HepG2 (cell line): ENCODE measurements at regions of chr12 and their contacts with region 1.

Region 1: DNA sequence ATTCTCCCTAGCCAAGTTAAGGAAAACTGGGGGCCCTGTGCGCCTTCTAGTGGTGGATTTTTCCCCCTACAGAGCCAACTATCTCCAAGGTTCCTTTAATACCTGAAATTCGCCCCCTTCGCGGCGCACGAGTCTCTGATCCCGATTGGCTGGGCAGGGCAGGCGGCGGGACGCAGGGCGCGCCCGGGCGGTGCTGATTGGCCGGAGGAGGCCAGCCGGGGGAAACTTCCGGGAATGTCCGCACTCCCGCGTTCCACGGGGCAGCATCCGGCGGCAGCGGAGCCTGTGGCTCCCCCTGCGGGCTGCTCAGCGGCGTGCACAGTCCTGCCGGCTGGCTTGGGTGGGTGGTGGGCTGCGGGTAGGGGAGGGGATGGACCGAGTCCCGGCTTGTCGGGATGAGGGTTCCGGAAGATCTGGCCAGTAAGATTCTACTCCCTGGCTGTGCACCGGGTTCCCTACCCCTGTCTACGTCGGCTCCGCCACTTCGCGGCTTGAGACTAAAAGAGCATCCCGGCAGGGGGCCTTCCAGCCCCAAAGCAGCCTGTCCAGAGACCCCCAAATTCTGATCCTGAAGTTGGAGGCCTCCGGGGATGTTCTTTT is at the start of gene NABP2:
- DNase-seq: peak; percentile 92
- ATAC-seq: peak; percentile 85
- H3K4me3 ChIP-seq: peak within 1 kb of the TSS; percentile 68 to 79 (median 78)
- H3K27ac ChIP-seq: peak within 1 kb of the TSS; percentile 26
- H3K4me1 ChIP-seq: peaks cover 39% of the 10 kb centered on the region
- H3K27me3 ChIP-seq: no peaks in the 10 kb centered on the region; a peak in 1 of 5 replicates
- CTCF ChIP-seq: peak; percentile 93
- EP300 ChIP-seq: no peak
- POLR2A ChIP-seq: no peak
- RAD21 ChIP-seq: peak; percentile 80
- total RNA-seq, gene NABP2: 31.2 and 33.2 TPM in 2 replicates

Region 2: DNA sequence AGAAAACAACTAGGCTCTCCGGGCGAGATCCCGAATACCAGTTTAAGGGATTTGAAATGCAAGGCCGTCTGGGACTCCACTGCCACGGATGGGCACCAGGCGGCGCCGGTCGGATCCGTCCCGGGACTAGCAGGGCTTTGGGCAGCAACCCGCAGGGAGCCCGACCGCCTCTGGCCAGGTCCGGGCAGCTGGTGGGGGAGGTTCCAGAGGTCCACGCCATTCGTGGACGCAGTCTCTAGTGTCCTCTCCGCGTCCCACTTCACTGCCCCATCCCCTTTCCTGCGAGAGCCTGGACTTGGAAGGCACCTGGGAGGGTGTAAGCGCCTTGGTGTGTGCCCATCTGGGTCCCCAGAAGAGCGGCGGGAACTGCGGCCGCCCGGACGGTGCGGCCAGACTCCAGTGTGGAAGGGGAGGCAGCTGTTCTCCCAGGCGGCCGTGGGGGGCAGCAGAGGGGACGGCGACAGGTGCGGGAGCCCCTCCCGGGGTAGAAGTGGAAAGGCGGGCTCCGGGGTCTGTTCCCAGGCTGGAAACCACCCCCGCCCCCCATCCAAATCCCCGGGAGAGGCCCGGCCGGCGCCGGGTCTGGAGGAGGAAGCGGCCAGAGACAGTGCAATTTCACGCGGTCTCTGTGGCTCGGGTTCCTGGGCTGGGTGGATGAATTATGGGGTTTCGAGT is 145.1 kb before region 1 on chr12:
- CTCF ChIA-PET with region 1: no interaction called
- POLR2A ChIA-PET with region 1: interaction called, 11 read pairs
- in situ Hi-C with region 1: no loop called
- intact Hi-C with region 1: no loop called
- DNase-seq: peak; percentile 81
- ATAC-seq: peak; percentile 61
- H3K4me3 ChIP-seq: peak overlapping the region; percentile 89 to 96 (median 91)
- H3K27ac ChIP-seq: peak overlapping the region; percentile 99
- H3K4me1 ChIP-seq: peaks cover 49% of the 10 kb centered on the region
- H3K27me3 ChIP-seq: no peaks in the 10 kb centered on the region; a peak in 1 of 5 replicates
- CTCF ChIP-seq: peak; percentile 83
- EP300 ChIP-seq: 0 out of 4 replicates have a peak, but pooled peaks of 1 of the 2 experiments have one; percentile 22
- POLR2A ChIP-seq: peak; percentile 67 to 73; a peak in 3 of 4 replicates
- RAD21 ChIP-seq: peak; percentile 80

Region 3: GRCh38 chr12:56117778-56118687 is 106.2 kb before region 1 on chr12 and contains the start of gene ZC3H10:
- CTCF ChIA-PET with region 1: interaction called, 12 read pairs
- POLR2A ChIA-PET with region 1: interaction called, 31 read pairs
- in situ Hi-C with region 1: no loop called
- intact Hi-C with region 1: loop called (anchors 2 kb)
- DNase-seq: peak; percentile 98
- ATAC-seq: peak; percentile 84
- H3K4me3 ChIP-seq: peak within 1 kb of the TSS; percentile 69 to 86 (median 74)
- H3K27ac ChIP-seq: peak within 1 kb of the TSS; percentile 93
- H3K4me1 ChIP-seq: peaks cover 51% of the 10 kb centered on the region
- H3K27me3 ChIP-seq: no peaks in the 10 kb centered on the region; a peak in 1 of 5 replicates
- CTCF ChIP-seq: peak; percentile 91
- EP300 ChIP-seq: peak in 1 of 2 experiments; percentile 73; a peak in 3 of 4 replicates
- POLR2A ChIP-seq: peak; percentile 99
- RAD21 ChIP-seq: peak; percentile 58
- total RNA-seq, gene ZC3H10: 1.9 and 2.3 TPM in 2 replicates

Region 4: DNA sequence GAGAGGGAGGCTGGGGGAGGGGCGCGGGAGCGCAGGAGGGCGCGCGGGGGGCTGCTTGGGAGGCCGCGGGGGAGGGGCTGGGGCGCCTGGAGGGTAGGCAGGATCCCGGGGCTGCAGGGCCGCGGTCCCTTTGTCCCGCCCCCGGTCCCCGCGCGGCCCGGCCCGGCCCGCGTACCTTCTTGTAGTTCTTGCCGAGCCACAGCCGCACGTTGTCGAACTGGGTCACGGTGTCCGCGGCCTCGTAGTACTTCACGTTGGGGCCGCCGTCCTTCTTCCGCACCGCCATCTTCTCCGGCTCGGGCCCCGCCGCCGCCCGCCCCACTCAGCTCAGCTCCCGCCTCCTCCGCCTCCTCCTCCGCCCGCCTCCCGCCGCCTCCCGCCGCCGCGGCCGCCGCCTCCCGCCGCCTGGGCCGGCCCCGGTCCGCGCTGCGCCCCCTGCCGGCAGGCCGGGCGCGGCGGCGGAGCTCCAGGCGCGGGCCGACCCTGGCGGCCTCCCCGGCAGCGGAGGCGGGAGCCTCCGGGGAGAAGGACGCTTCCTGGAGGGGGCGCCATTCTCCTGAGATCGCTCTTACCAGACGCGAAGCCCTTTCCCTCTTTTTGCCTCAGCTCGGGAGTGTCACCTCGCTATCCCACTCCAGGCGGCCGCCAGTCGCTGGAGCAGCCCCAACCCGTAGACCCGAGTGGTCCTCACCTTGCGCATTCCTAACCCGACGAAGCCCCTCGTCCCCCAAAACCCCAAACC is 34.9 kb before region 1 on chr12 and contains the start of gene SMARCC2:
- CTCF ChIA-PET with region 1: interaction called, 4 read pairs
- POLR2A ChIA-PET with region 1: interaction called, 22 read pairs
- in situ Hi-C with region 1: no loop called
- intact Hi-C with region 1: loop called (anchors 1 kb)
- DNase-seq: peak; percentile 73
- ATAC-seq: peak; percentile 86
- H3K4me3 ChIP-seq: peak within 1 kb of the TSS; percentile 76 to 94 (median 93)
- H3K27ac ChIP-seq: peak within 1 kb of the TSS; percentile 74
- H3K4me1 ChIP-seq: peaks cover 34% of the 10 kb centered on the region
- H3K27me3 ChIP-seq: no peaks in the 10 kb centered on the region; a peak in 1 of 5 replicates
- CTCF ChIP-seq: peak; percentile 81
- EP300 ChIP-seq: no peak
- POLR2A ChIP-seq: peak; percentile 29 to 46; a peak in 2 of 4 replicates
- RAD21 ChIP-seq: peak; percentile 62
- total RNA-seq, gene SMARCC2: 13.1 and 21.3 TPM in 2 replicates

Region 5: GRCh38 chr12:56258057-56258819 is 34.0 kb after region 1 on chr12 and contains the start of gene ANKRD52:
- CTCF ChIA-PET with region 1: interaction called, 12 read pairs
- POLR2A ChIA-PET with region 1: interaction called, 24 read pairs
- in situ Hi-C with region 1: loop called (anchors 5 kb)
- intact Hi-C with region 1: loop called (anchors 5 kb)
- DNase-seq: peak; percentile 26
- ATAC-seq: peak; percentile 92
- H3K4me3 ChIP-seq: peak within 1 kb of the TSS; percentile 74 to 96 (median 88)
- H3K27ac ChIP-seq: peak within 1 kb of the TSS; percentile 45
- H3K4me1 ChIP-seq: peaks cover 28% of the 10 kb centered on the region
- H3K27me3 ChIP-seq: no peaks in the 10 kb centered on the region
- CTCF ChIP-seq: peak; percentile 61
- EP300 ChIP-seq: no peak
- POLR2A ChIP-seq: peak in 1 of 2 experiments; percentile 47; a peak in 2 of 4 replicates
- RAD21 ChIP-seq: peak; percentile 84
- total RNA-seq, gene ANKRD52: 7.8 and 22.0 TPM in 2 replicates

Region 6: DNA sequence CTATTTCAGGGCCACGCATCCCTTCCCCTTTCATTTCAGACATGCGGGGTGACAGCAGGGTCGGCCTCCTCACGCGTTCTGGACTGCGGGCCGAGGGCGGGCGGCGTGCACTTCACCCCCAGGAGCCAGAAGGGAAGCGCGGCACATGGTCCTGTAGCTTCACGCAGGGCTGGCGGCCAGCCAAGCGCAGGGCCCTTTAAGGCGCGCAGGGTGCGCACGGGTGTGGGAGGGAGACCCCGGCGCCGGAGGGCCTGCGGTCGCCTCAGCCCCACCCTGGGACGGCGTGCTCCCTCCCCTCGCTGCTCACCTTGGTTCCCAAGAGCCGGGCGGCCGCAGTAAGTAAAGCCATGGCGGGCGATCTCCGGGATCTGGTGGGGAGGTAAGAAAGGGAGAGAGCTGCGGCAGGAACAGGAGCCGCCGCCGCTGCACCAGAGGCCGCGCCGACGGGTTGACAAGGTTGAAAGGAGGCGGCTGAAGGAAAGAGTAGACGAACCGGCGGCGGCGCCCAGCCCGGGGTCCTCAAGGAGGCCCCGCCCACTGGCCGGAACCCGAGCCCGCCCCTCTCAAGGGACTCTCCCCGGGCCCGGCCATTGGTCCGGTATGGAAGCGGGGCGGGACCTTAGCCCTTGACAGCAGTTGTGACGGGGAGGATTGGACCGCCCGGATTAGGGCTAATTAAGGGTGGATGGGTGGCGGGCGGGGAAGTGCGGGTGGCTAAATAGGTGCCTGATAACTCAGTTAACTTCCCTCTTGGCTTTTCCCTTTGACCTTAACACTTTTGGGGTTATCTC is 75.8 kb after region 1 on chr12 and contains the start of gene CS:
- CTCF ChIA-PET with region 1: no interaction called
- POLR2A ChIA-PET with region 1: interaction called, 10 read pairs
- in situ Hi-C with region 1: no loop called
- intact Hi-C with region 1: no loop called
- DNase-seq: peak; percentile 96
- ATAC-seq: peak; percentile 87
- H3K4me3 ChIP-seq: peak within 1 kb of the TSS; percentile 76 to 97 (median 94)
- H3K27ac ChIP-seq: peak within 1 kb of the TSS; percentile 96
- H3K4me1 ChIP-seq: peaks cover 65% of the 10 kb centered on the region
- H3K27me3 ChIP-seq: no peaks in the 10 kb centered on the region; a peak in 1 of 5 replicates
- CTCF ChIP-seq: 0 out of 2 replicates have a peak, but pooled peaks have one; percentile 7
- EP300 ChIP-seq: 0 out of 4 replicates have a peak, but pooled peaks of 1 of the 2 experiments have one; percentile 26
- POLR2A ChIP-seq: peak; percentile 54 to 70
- RAD21 ChIP-seq: peak; percentile 59
- total RNA-seq, gene CS: 175 and 243 TPM in 2 replicates

Region 7: DNA sequence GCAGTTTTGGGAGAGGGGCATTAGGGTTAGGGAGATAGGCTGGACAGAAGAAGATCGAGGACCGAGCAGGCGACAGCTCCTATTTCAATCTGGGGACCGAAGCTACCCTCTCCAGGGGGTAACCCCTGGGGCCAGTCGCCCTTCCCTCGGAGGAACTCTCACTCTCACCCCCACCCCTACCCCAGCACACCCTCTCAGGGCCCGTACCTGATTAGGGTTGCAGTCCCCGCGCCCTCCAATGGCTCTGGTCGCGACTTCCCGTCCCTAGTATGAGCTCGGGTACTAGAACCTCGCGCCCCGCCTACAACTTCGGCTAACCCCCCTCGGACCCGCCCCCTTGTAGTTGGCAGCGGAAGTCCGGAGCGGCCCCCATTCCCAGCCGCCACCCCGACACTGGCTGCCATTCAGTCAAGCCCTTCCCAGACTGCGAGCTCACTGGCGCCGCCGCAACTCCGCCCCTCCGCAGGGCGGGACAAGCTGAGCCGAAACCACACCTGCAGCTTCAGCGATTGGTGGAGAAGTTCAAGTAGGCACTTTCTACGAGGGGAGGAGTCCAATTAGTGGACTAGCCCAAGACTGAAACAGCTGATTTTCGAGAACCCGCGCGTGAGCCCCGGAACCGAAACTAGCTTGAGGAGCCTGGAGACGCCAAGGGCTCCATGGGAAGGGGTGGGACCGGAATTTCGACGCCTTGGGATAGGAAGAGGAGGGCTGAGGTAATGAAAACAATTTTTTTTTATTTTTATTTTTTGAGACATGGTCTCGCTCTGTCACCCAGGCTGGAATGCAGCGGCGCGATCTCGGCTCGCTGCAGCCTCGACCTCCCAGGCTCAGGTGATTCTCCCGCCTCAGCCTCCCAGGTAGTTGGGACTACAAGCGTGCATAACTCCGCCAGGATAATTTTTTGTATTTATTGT is 135.9 kb after region 1 on chr12 and contains the start of gene STAT2:
- CTCF ChIA-PET with region 1: no interaction called
- POLR2A ChIA-PET with region 1: interaction called, 11 read pairs
- in situ Hi-C with region 1: no loop called
- intact Hi-C with region 1: no loop called
- DNase-seq: peak; percentile 98
- ATAC-seq: peak; percentile 93
- H3K4me3 ChIP-seq: peak within 1 kb of the TSS; percentile 83 to 94 (median 87)
- H3K27ac ChIP-seq: peak within 1 kb of the TSS; percentile 83
- H3K4me1 ChIP-seq: peaks cover 72% of the 10 kb centered on the region
- H3K27me3 ChIP-seq: no peaks in the 10 kb centered on the region
- CTCF ChIP-seq: no peak
- EP300 ChIP-seq: peak; percentile 11 to 65; a peak in 2 of 4 replicates
- POLR2A ChIP-seq: peak; percentile 41 to 78; a peak in 3 of 4 replicates
- RAD21 ChIP-seq: peak; percentile 19; the same call in 1 of the 2 replicates
- total RNA-seq, gene STAT2: 41.6 and 43.5 TPM in 2 replicates